ENCODE measurements at regions of chr4 and their contacts with region 1.

Region 1: GRCh38 chr4:108570993-108571569 is 49.3 kb upstream of the RPL34 start:
- DNase-seq: no peak
- H3K4me3 ChIP-seq: no peak overlapping the region
- H3K4me3 Mint-ChIP-seq: no peak overlapping the region
- H3K27ac ChIP-seq: no peak overlapping the region
- H3K27ac Mint-ChIP-seq: no peak overlapping the region
- H3K4me1 ChIP-seq: peaks cover 6% of the 10 kb centered on the region
- H3K4me1 Mint-ChIP-seq: peaks cover 3 to 6% (median 4%) of the 10 kb centered on the region in 3 donors
- H3K27me3 ChIP-seq: no peaks in the 10 kb centered on the region
- H3K27me3 Mint-ChIP-seq: peaks cover 0 to 5% of the 10 kb centered on the region in 2 donors

Region 2: DNA sequence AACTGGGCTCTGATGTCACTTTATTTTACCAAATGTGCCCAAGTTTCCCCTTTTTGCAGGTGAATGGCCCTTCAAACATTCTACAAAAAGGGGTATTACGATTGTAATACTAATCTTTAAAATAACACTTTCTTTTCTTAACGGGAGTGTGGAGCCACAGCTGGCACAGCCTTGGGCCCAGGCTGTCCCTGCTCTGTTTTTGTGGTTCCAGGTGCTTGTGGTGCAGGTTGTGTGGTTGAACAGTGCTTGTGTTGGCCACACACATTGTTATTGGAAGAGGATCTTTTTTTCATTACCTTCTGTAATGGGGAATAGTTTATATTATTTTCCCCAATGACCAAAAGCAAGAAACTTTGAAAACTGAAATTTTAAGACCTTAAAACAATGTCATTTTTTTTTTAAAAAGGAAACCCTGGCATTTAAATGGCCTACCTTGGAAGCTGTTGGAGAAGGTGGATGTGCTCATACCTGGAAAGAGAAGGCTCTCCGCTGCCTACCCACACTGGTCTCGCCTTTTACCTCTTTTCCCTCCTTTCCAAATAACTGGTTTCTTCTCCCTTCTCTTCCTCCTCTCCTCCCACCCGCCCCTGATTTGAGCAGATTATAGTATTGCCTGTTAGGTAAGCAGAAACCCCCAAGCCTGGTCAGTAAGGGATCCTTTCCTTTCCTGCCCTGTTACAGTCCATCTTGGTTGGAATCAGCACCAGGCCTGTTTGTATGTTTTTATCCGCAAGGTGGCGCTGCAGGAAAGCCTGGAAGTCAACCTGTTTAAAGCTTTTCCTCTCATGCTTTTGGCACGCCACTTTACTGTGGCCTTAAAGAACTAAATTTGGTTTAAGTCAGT is 552.8 kb before region 1 on chr4:
- CTCF ChIA-PET with region 1: interaction called, 56 read pairs
- POLR2A ChIA-PET with region 1: no interaction called
- DNase-seq: peak; percentile 63 to 84 (median 69)
- H3K4me3 ChIP-seq: no peak overlapping the region
- H3K4me3 Mint-ChIP-seq: no peak overlapping the region
- H3K27ac ChIP-seq: no peak overlapping the region
- H3K27ac Mint-ChIP-seq: peak overlapping the region in 2 of 8 donors; percentile 48 to 50
- H3K4me1 ChIP-seq: no peaks in the 10 kb centered on the region
- H3K4me1 Mint-ChIP-seq: peaks cover 2 to 13% (median 6%) of the 10 kb centered on the region in 3 donors
- H3K27me3 ChIP-seq: no peaks in the 10 kb centered on the region
- H3K27me3 Mint-ChIP-seq: no peaks in the 10 kb centered on the region

Region 3: DNA sequence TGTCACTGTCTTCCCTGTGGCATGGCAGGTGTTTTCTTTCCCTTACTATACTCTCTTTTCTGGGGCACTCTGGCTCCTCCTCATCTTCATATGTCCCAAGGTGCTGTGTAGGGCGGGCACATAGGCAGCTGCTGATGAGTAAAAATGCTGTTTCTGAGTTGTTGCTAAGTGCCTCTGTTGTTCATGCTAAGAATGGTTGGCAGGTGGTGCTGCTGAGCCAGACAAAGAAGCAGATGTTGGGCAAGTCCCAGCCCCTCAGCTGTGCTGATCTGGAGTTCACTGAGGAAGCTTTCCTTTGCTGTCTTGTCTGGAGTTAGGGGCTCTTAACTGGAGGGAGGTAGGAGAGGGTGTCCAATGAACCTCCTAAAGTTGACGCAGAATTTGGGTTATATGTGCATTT is 540.7 kb before region 1 on chr4:
- CTCF ChIA-PET with region 1: interaction called, 39 read pairs
- POLR2A ChIA-PET with region 1: no interaction called
- DNase-seq: peak; percentile 21 to 81 (median 56)
- H3K4me3 ChIP-seq: no peak overlapping the region
- H3K4me3 Mint-ChIP-seq: peak overlapping the region in 3 of 7 donors; percentile 16 to 47 (median 24)
- H3K27ac ChIP-seq: no peak overlapping the region
- H3K27ac Mint-ChIP-seq: peak overlapping the region; percentile 1 to 90 (median 66)
- H3K4me1 ChIP-seq: peaks cover 48% of the 10 kb centered on the region
- H3K4me1 Mint-ChIP-seq: peaks cover 20 to 27% (median 26%) of the 10 kb centered on the region in 3 donors
- H3K27me3 ChIP-seq: no peaks in the 10 kb centered on the region
- H3K27me3 Mint-ChIP-seq: no peaks in the 10 kb centered on the region

Region 4: DNA sequence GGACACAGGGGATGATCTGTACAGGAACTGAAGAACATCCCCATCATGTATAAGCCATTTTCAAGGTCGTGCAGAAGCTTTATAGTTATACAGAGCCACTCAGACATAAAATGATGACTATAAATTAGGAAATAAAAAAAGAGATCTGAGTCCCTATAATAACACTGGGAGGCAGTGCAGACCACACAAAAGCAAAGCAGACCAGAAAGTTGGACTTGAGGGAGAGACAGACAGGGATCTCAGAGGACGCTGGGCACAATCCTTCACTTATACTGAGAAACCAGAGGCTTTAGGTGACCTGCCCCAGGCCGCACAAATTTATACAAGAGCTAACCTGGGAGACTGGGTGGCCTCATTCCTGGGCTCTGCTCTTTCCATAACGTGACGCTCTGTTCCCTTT is 510.9 kb before region 1 on chr4:
- CTCF ChIA-PET with region 1: interaction called, 13 read pairs
- POLR2A ChIA-PET with region 1: no interaction called
- DNase-seq: no peak
- H3K4me3 ChIP-seq: no peak overlapping the region
- H3K4me3 Mint-ChIP-seq: no peak overlapping the region
- H3K27ac ChIP-seq: no peak overlapping the region
- H3K27ac Mint-ChIP-seq: peak overlapping the region in 2 of 8 donors; percentile 49 to 62
- H3K4me1 ChIP-seq: peaks cover 84% of the 10 kb centered on the region
- H3K4me1 Mint-ChIP-seq: peaks cover 15 to 35% (median 20%) of the 10 kb centered on the region in 3 donors
- H3K27me3 ChIP-seq: no peaks in the 10 kb centered on the region
- H3K27me3 Mint-ChIP-seq: peaks cover 2 to 8% of the 10 kb centered on the region in 2 donors

Measured in CD8-positive, alpha-beta memory T cell (primary cell).